Astrocyte of the cerebellum (primary cell): ENCODE measurements at regions of chr6 and their contacts with region 1.

Region 1: DNA sequence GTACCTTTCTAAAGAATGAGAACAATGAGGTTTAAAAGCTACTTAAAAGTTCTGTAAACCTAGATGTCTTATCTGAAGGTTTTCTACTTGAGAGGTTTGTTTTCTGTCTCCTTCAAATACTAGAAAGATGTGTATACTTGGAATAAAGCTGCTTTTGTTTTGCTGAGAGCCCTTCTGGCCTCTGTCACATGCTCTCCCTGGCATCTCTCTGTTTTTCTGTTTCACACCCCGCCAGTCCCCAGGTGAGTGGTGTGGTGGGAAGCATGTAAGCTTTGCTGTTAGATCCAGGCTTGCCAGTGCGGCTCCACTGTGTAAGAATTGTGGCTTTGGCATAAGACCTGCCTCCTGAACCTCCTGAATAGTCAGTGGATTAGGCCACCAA is 56.8 kb downstream of the SNX9 start:
- DNase-seq: no peak
- H3K4me3 ChIP-seq: no peak overlapping the region
- CTCF ChIP-seq: no peak

Region 2: GRCh38 chr6:157814883-157815282 is 65.0 kb before region 1 on chr6:
- in situ Hi-C with region 1: no loop called
- DNase-seq: no peak
- H3K4me3 ChIP-seq: no peak overlapping the region
- CTCF ChIP-seq: no peak

Region 3: DNA sequence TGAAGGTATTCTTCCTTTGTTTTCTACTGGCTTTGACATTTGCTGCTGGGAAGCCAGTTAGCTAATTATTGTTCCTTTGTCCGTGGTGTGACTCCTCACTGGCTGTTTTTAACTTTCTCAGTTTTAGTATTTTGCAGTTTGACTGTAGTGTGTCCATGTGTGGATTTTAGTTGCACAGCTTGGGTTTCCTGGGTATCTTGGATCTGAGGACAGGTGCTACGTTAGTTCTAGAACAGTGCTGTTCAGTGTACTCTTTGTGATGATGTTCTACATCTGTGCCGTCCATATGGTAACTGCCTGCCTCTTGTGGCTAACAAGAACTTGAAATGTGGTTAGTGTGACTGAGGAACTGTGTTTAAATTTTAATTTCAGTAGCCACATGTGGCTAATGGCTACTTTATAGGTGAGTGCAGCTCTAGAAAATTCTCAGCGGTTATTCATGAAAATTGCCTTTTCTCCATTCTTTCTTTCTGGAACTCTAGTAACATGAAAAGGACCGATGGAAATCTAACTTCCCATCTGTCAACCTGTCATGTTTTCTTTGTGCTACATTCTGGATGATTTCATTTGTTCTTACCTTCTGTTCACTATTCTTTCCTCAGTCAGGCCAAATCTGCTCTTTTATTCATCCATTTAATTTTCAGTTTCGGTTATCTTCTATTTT is 49.4 kb before region 1 on chr6:
- in situ Hi-C with region 1: loop called (anchors 5 kb)
- DNase-seq: no peak
- H3K4me3 ChIP-seq: no peak overlapping the region
- CTCF ChIP-seq: no peak